ENCODE measurements at regions of chr12 and their contacts with region 1.

Region 1: GRCh38 chr12:94980577-94980976 is 22.9 kb downstream of the NDUFA12 start:
- DNase-seq: no peak
- H3K4me3 Mint-ChIP-seq: no peak overlapping the region
- H3K27ac Mint-ChIP-seq: no peak overlapping the region
- H3K4me1 Mint-ChIP-seq: peaks cover 34% of the 10 kb centered on the region
- H3K27me3 Mint-ChIP-seq: no peaks in the 10 kb centered on the region

Region 2: GRCh38 chr12:94813314-94813713 is 167.3 kb before region 1 on chr12:
- CTCF ChIA-PET with region 1: interaction called, 3 read pairs
- POLR2A ChIA-PET with region 1: no interaction called
- intact Hi-C with region 1: loop called (anchors 10 kb)
- DNase-seq: no peak
- H3K4me3 Mint-ChIP-seq: no peak overlapping the region
- H3K27ac Mint-ChIP-seq: no peak overlapping the region
- H3K4me1 Mint-ChIP-seq: no peaks in the 10 kb centered on the region
- H3K27me3 Mint-ChIP-seq: peaks cover 4% of the 10 kb centered on the region

Region 3: GRCh38 chr12:94875525-94875924 is 105.1 kb before region 1 on chr12:
- CTCF ChIA-PET with region 1: no interaction called
- POLR2A ChIA-PET with region 1: no interaction called
- intact Hi-C with region 1: loop called (anchors 5 kb)
- DNase-seq: peak; percentile 23
- H3K4me3 Mint-ChIP-seq: no peak overlapping the region
- H3K27ac Mint-ChIP-seq: no peak overlapping the region
- H3K4me1 Mint-ChIP-seq: peaks cover 17% of the 10 kb centered on the region
- H3K27me3 Mint-ChIP-seq: peaks cover 55% of the 10 kb centered on the region

Region 4: DNA sequence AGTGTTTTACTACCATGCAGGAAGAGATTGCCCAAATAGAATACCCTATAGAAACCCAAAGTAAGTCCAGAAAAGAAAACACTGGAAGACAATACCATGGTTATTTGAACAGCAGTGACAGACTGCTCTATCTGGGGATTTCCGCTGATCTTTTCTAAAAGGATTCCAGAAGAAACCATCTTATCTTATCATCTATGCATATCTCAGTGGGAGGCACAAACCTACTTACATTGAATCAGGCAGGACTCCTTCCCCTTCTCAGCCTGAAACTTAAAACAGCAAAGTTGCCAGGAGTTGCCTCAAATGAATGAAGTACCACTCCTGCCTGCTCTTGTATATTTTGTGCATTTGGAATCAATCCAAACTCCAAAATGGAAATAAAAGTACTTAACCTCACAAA is 149.5 kb after region 1 on chr12:
- CTCF ChIA-PET with region 1: no interaction called
- POLR2A ChIA-PET with region 1: no interaction called
- intact Hi-C with region 1: no loop called
- DNase-seq: no peak
- H3K4me3 Mint-ChIP-seq: no peak overlapping the region
- H3K27ac Mint-ChIP-seq: no peak overlapping the region
- H3K4me1 Mint-ChIP-seq: no peaks in the 10 kb centered on the region
- H3K27me3 Mint-ChIP-seq: no peaks in the 10 kb centered on the region

Region 5: DNA sequence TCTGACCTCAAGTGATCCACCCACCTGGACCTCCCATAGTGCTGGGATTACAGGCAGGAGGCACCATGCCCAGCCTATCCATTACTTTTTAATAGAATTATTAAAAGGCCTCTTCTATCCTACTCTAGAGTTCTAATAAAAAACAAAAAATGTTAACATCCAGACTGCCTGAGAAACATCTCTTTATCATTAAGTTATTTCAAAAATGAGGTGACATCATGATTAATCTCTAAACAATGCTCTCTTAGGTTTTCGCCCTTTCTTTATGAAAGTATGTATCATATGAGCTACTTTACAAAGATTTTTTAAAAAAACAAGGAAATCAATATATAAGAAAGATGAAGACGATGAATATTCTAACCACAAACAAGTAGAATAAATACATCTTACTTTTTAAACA is 184.1 kb after region 1 on chr12:
- CTCF ChIA-PET with region 1: no interaction called
- POLR2A ChIA-PET with region 1: no interaction called
- intact Hi-C with region 1: no loop called
- DNase-seq: no peak
- H3K4me3 Mint-ChIP-seq: no peak overlapping the region
- H3K27ac Mint-ChIP-seq: no peak overlapping the region
- H3K4me1 Mint-ChIP-seq: no peaks in the 10 kb centered on the region
- H3K27me3 Mint-ChIP-seq: peaks cover 1% of the 10 kb centered on the region

Measured in activated CD4-positive, alpha-beta memory T cell treated with anti-CD3 and anti-CD28 coated beads for 36 hours (primary cell).